ENCODE measurements at regions of chr12 and their contacts with region 1.

Region 1: GRCh38 chr12:16385782-16386646 is 38.6 kb downstream of the MGST1 start:
- DNase-seq: peak; percentile 88
- ATAC-seq: peak; percentile 99
- H3K4me3 ChIP-seq: no peak overlapping the region
- H3K27ac ChIP-seq: peak overlapping the region; percentile 33
- H3K4me1 ChIP-seq: peaks cover 17% of the 10 kb centered on the region
- H3K27me3 ChIP-seq: no peaks in the 10 kb centered on the region
- CTCF ChIP-seq: peak; percentile 91
- EP300 ChIP-seq: peak in 1 of 2 experiments; percentile 46; a peak in 1 of 4 replicates
- POLR2A ChIP-seq: no peak
- RAD21 ChIP-seq: peak; percentile 66

Region 2: GRCh38 chr12:15996254-15996653 is 389.8 kb before region 1 on chr12:
- CTCF ChIA-PET with region 1: no interaction called
- POLR2A ChIA-PET with region 1: no interaction called
- in situ Hi-C with region 1: no loop called
- intact Hi-C with region 1: no loop called
- DNase-seq: no peak
- ATAC-seq: no peak; the same call in 1 of the 3 replicates
- H3K4me3 ChIP-seq: no peak overlapping the region
- H3K27ac ChIP-seq: no peak overlapping the region
- H3K4me1 ChIP-seq: no peaks in the 10 kb centered on the region
- H3K27me3 ChIP-seq: no peaks in the 10 kb centered on the region
- CTCF ChIP-seq: peak; percentile 23
- EP300 ChIP-seq: no peak
- POLR2A ChIP-seq: no peak
- RAD21 ChIP-seq: no peak

Region 3: GRCh38 chr12:16048511-16048910 is 337.5 kb before region 1 on chr12:
- CTCF ChIA-PET with region 1: no interaction called
- POLR2A ChIA-PET with region 1: no interaction called
- in situ Hi-C with region 1: no loop called
- intact Hi-C with region 1: no loop called
- DNase-seq: no peak
- ATAC-seq: no peak
- H3K4me3 ChIP-seq: no peak overlapping the region
- H3K27ac ChIP-seq: no peak overlapping the region
- H3K4me1 ChIP-seq: no peaks in the 10 kb centered on the region
- H3K27me3 ChIP-seq: no peaks in the 10 kb centered on the region; a peak in 1 of 5 replicates
- CTCF ChIP-seq: no peak
- EP300 ChIP-seq: no peak
- POLR2A ChIP-seq: no peak
- RAD21 ChIP-seq: no peak

Region 4: GRCh38 chr12:16685107-16685506 is 299.1 kb after region 1 on chr12:
- CTCF ChIA-PET with region 1: no interaction called
- POLR2A ChIA-PET with region 1: no interaction called
- in situ Hi-C with region 1: no loop called
- intact Hi-C with region 1: loop called (anchors 1 kb)
- DNase-seq: no peak
- ATAC-seq: no peak
- H3K4me3 ChIP-seq: no peak overlapping the region
- H3K27ac ChIP-seq: no peak overlapping the region
- H3K4me1 ChIP-seq: no peaks in the 10 kb centered on the region
- H3K27me3 ChIP-seq: no peaks in the 10 kb centered on the region
- CTCF ChIP-seq: no peak
- EP300 ChIP-seq: no peak
- POLR2A ChIP-seq: no peak
- RAD21 ChIP-seq: no peak

Region 5: GRCh38 chr12:17642340-17642650 is 1256.3 kb after region 1 on chr12:
- CTCF ChIA-PET with region 1: interaction called, 4 read pairs
- POLR2A ChIA-PET with region 1: no interaction called
- in situ Hi-C with region 1: loop called (anchors 25 kb)
- intact Hi-C with region 1: loop called (anchors 5 kb)
- DNase-seq: no peak
- ATAC-seq: no peak
- H3K4me3 ChIP-seq: no peak overlapping the region
- H3K27ac ChIP-seq: no peak overlapping the region
- H3K4me1 ChIP-seq: no peaks in the 10 kb centered on the region
- H3K27me3 ChIP-seq: no peaks in the 10 kb centered on the region
- CTCF ChIP-seq: no peak
- EP300 ChIP-seq: no peak
- POLR2A ChIP-seq: no peak
- RAD21 ChIP-seq: no peak

Measured in HepG2 (cell line).